Panc1 (cell line): ENCODE measurements at regions of chr1 and their contacts with region 1.

Region 1: DNA sequence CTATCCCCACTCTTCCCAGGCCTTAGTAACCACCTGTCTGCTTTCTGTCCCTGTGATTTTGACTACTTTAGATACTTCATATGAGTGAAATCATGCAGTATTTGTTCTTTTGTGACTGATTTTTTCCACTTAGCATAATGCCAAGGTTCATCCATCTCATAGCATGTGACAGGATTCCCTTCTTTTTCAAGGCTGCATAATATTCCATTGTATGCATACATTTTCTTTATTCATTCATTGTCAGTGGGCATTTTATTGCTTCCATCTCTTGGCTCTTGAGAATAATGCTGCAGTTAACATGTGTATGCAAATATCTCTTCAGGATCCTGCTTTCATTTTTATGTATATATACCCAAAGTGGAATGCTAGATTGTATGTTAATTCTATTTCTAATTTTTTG is 56.4 kb downstream of the AGL start:
- DNase-seq: no peak
- ATAC-seq: no peak
- H3K4me3 ChIP-seq: no peak overlapping the region
- H3K27ac ChIP-seq: no peak overlapping the region
- H3K4me1 ChIP-seq: no peaks in the 10 kb centered on the region
- H3K27me3 ChIP-seq: no peaks in the 10 kb centered on the region
- CTCF ChIP-seq: no peak

Region 2: DNA sequence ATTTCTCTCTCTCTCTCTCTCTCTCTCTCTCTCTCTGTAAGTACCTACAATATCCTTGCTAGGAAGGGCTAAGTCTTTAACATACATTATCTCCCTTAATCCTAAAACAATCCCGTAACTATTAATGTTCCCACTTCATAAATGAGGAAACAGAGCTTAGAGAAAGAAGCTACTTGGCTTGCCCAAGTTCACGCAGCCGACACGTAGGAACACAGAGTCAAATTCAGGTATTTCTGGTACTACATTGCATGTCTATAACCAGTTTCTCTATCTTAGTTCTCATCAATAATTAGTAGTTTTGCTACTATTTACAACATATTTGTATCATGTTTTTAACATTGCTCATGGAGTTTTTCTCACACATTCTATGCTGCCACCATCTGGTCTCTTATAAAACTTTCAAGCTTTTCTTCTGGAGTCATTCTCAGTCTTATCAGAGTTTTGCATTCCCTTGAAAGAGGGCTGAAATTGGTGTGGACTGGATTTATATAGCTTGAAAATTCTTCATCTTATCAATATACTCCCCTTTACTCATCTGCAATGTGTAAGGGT is 379.5 kb before region 1 on chr1:
- CTCF ChIA-PET with region 1: no interaction called
- POLR2A ChIA-PET with region 1: no interaction called
- in situ Hi-C with region 1: no loop called
- intact Hi-C with region 1: no loop called
- DNase-seq: no peak
- ATAC-seq: no peak
- H3K4me3 ChIP-seq: no peak overlapping the region
- H3K27ac ChIP-seq: no peak overlapping the region
- H3K4me1 ChIP-seq: no peaks in the 10 kb centered on the region
- H3K27me3 ChIP-seq: no peaks in the 10 kb centered on the region
- CTCF ChIP-seq: peak; percentile 18; the same call in 1 of the 2 replicates

Region 3: DNA sequence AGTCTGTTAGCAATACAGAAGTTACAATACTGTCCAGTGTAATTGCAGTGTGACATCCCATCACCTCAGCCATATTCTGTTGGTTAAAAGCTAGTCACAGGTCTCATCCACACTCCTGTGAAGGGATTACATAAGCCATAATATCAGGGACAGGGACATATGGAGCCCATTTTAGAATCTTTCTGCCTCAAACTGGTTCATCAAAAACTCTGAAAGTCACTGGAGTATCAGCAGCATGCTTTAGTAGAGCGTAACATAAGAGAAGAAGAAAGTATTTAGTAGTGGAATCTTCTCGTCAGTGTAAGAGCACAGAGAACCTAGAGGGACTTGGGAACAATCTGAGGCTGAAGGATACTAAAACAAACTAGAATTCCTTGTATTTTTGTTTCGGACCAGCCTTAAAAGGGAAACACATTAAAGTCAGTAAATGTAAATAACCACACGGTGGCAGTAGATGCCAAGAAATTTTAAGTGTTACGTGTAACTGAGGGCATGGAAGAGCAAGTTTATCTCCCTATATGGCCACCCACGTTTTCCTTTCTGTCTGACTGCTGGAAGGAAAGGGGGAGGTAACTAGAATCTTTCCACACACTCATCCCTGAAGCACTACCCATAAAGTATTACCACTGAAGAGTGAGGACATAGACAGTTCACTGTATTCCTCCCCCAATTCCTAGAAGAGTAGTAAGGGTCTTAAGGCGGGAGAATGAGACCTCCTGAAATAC is 98.0 kb before region 1 on chr1:
- CTCF ChIA-PET with region 1: no interaction called
- POLR2A ChIA-PET with region 1: no interaction called
- in situ Hi-C with region 1: no loop called
- intact Hi-C with region 1: no loop called
- DNase-seq: peak; percentile 32
- ATAC-seq: peak; percentile 89
- H3K4me3 ChIP-seq: no peak overlapping the region; a peak in 1 of 4 replicates
- H3K27ac ChIP-seq: no peak overlapping the region
- H3K4me1 ChIP-seq: peaks cover 3% of the 10 kb centered on the region; the same call in 1 of the 2 replicates
- H3K27me3 ChIP-seq: no peaks in the 10 kb centered on the region; the same call in 1 of the 2 replicates
- CTCF ChIP-seq: peak; percentile 52

Region 4: GRCh38 chr1:99849744-99850458 is 56.6 kb before region 1 on chr1 and contains the start of gene AGL:
- CTCF ChIA-PET with region 1: no interaction called
- POLR2A ChIA-PET with region 1: no interaction called
- in situ Hi-C with region 1: no loop called
- intact Hi-C with region 1: loop called (anchors 10 kb)
- DNase-seq: no peak
- ATAC-seq: peak; percentile 100
- H3K4me3 ChIP-seq: peak within 1 kb of the TSS; percentile 77 to 79
- H3K27ac ChIP-seq: peak within 1 kb of the TSS; percentile 83
- H3K4me1 ChIP-seq: peaks cover 3% of the 10 kb centered on the region; the same call in 1 of the 2 replicates
- H3K27me3 ChIP-seq: no peaks in the 10 kb centered on the region
- CTCF ChIP-seq: no peak
- total RNA-seq, gene AGL: 12.0 TPM

Region 5: DNA sequence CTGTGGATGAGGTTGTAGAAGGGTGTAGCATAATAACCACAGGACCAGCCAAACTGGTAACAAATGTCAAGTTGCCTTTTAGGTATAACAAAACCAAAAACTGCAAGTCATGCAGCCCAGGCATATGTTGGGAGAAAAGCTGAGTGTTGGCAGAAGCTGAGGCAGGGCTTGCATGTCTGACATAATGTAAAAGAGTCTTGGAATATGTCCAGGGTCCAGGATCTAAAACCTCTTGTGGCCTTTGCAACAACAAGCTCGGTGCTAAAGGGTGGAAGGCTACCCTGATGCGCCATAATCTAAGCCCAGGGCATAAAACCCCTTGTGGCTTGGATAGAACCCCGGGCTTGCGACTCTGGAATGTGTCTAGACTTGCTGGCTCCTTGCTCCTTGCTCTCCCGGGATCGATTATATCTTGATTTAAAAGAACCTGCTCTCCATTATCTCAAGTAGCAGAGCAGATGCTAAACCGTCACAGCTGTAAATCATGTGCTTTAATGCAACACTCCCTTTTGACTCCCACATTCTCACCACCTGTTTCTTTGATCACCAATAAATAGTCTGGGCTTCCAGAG is 36.8 kb after region 1 on chr1:
- CTCF ChIA-PET with region 1: interaction called, 20 read pairs
- POLR2A ChIA-PET with region 1: no interaction called
- in situ Hi-C with region 1: no loop called
- intact Hi-C with region 1: no loop called
- DNase-seq: no peak
- ATAC-seq: no peak
- H3K4me3 ChIP-seq: no peak overlapping the region
- H3K27ac ChIP-seq: no peak overlapping the region
- H3K4me1 ChIP-seq: no peaks in the 10 kb centered on the region
- H3K27me3 ChIP-seq: no peaks in the 10 kb centered on the region
- CTCF ChIP-seq: no peak